Esophagus muscularis mucosa (tissue), 4 donors: ENCODE measurements at regions of chr14 and their contacts with region 1.

Region 1: DNA sequence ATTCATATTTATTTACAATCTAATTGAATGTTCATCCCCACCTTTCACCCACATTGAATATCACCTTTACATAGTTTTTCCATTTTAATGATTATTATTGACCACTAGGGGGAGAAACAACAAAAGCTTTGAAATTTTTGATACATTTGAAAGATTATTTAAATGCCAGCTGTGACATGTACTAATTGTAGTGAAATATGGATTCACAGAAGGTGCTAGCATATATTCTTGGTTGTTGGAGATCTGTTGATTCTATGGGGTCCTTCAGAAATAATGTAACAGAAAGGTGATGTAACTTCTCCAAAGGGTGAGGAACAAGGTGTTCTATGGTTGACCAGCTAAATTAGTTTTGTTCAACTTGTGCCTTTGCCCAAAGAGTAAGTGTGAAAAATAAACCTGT is 22.4 kb upstream of the GPR33 start:
- DNase-seq: no peak
- H3K4me3 ChIP-seq: no peak overlapping the region
- H3K27ac ChIP-seq: no peak overlapping the region
- H3K4me1 ChIP-seq: peaks cover 11 to 20% (median 13%) of the 10 kb centered on the region in 4 donors
- H3K27me3 ChIP-seq: no peaks in the 10 kb centered on the region
- CTCF ChIP-seq: peak; percentile 54 to 63 (median 54)
- EP300 ChIP-seq: no peak
- POLR2A ChIP-seq: no peak

Region 2: GRCh38 chr14:31568671-31569070 is 58.4 kb after region 1 on chr14:
- intact Hi-C with region 1: loop called (anchors 5 kb)
- DNase-seq: no peak
- H3K4me3 ChIP-seq: no peak overlapping the region
- H3K27ac ChIP-seq: no peak overlapping the region
- H3K4me1 ChIP-seq: peaks cover 0 to 33% (median 13%) of the 10 kb centered on the region in 4 donors
- H3K27me3 ChIP-seq: no peaks in the 10 kb centered on the region
- CTCF ChIP-seq: no peak
- EP300 ChIP-seq: no peak
- POLR2A ChIP-seq: no peak

Region 3: DNA sequence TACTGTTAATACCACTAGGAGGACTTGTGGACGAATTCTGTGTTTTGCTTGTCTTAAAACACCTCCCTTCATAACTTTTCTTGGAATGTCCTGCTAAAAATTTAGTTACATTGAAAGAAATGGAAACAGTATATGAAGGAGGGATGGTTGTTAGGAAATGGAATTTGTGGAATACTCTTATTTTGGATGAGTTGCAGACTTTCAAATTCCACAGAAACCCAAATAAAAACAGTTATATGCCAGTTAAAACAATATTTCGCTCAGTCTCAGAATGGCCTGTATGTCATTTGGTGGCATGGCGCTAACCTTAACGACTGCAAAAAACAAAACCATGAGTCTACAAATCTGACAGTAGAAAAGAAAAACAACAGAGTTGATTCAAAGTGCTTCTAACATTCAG is 554.7 kb after region 1 on chr14:
- intact Hi-C with region 1: loop called (anchors 10 kb)
- DNase-seq: no peak
- H3K4me3 ChIP-seq: no peak overlapping the region
- H3K27ac ChIP-seq: no peak overlapping the region
- H3K4me1 ChIP-seq: no peaks in the 10 kb centered on the region
- H3K27me3 ChIP-seq: no peaks in the 10 kb centered on the region
- CTCF ChIP-seq: no peak
- EP300 ChIP-seq: no peak
- POLR2A ChIP-seq: no peak